ENCODE measurements at regions of chr4 and their contacts with region 1.

Region 1: DNA sequence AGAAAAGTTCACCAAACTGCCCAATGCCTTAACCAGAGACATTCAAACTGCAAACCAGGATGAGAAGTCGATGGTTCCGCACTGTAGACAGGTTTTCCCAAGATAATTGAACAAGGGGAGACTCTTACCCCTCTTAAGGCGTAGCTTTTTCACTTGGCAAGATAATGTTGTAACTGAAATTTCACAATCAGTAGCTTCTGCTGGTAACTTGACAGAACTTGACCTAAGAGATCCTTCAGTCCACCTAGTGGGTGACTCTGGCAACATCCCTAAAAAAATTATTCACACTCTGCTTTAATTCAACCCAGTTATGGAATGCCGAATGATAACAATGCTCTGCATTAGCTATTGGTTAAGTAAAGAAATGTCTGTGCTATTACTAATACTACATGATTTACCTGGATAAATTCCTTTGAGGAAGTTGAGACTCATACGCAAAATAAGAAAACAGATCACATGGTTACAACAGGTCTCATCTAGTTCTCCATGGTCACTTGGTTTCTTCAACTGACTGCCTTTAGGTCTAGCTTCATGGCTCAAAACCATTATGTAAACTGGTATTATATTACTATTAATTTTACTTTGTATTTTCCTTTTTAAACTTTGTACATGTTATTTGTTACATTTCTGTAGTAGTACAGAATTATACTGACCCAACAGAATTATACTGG is 9.1 kb downstream of the ELF2 start:
- DNase-seq: peak; percentile 65
- ATAC-seq: peak; percentile 59
- H3K4me3 ChIP-seq: no peak overlapping the region
- H3K27ac ChIP-seq: no peak overlapping the region
- H3K4me1 ChIP-seq: peaks cover 8% of the 10 kb centered on the region
- H3K27me3 ChIP-seq: no peaks in the 10 kb centered on the region
- CTCF ChIP-seq: peak; percentile 60

Region 2: DNA sequence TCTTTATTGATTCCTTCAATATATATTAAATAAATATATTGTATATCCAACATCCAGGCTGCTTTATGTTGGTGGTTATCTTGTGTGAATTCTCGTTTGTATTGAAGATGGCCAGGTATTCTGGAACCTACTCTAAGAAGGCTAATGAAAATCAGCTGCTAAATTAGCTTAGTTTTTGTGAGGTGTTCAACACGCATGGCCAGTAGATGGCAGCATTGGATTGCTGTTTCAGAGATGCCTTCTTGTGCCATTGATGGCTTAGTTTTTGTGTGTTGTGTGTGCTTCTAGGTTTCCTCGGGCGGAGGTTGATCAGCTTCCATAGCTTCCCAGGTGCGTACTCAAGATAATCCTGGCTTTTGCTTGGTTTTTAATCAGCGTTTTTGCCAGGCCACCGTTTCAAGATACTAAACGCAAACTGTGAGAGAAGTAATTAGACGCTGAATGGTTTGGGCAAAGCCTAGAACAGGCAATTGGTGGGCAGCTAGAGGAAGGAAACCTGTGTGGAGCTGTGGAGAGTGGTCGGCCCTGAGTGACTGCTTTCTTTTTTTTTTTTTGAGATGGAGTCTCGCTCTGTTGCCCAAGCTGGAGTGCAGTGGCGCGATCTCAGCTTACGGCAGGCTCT is 137.2 kb before region 1 on chr4:
- CTCF ChIA-PET with region 1: interaction called, 4 read pairs
- POLR2A ChIA-PET with region 1: no interaction called
- intact Hi-C with region 1: loop called (anchors 5 kb)
- DNase-seq: peak; percentile 72
- ATAC-seq: peak; percentile 68
- H3K4me3 ChIP-seq: no peak overlapping the region
- H3K27ac ChIP-seq: no peak overlapping the region
- H3K4me1 ChIP-seq: no peaks in the 10 kb centered on the region
- H3K27me3 ChIP-seq: no peaks in the 10 kb centered on the region
- CTCF ChIP-seq: peak; percentile 74

Region 3: DNA sequence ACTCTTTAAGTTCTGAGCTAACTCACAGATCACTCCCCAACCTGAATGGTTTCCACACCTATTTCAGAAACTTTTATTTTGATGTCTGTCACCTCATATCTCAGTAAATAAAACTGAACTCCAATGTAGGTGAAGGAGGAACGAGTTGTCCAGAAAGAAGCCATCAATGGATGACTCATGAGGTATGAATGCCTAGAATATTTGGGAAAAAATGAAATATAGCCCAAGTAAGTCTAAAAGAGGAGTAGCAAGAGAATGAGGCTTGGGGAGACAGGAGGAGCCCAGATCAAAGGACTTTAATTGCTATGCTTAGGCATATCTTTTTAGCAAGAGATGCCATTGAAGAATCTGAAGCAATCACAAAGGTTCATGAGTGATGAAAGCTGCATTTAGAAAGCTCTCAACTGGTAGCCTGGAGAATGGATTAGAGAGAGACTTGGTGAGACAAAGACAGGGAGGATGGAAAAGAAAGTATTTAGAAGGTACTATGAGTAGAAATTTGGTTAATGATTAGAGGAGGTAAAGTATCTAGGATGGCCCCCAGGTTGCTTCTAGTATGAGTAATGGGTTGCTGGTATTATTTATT is 113.0 kb before region 1 on chr4:
- CTCF ChIA-PET with region 1: no interaction called
- POLR2A ChIA-PET with region 1: no interaction called
- intact Hi-C with region 1: no loop called
- DNase-seq: peak; percentile 59
- ATAC-seq: peak; percentile 73
- H3K4me3 ChIP-seq: no peak overlapping the region
- H3K27ac ChIP-seq: no peak overlapping the region
- H3K4me1 ChIP-seq: peaks cover 17% of the 10 kb centered on the region
- H3K27me3 ChIP-seq: no peaks in the 10 kb centered on the region
- CTCF ChIP-seq: no peak

Region 4: GRCh38 chr4:139099366-139099982 is 68.4 kb before region 1 on chr4:
- CTCF ChIA-PET with region 1: no interaction called
- POLR2A ChIA-PET with region 1: no interaction called
- intact Hi-C with region 1: loop called (anchors 1 kb)
- DNase-seq: peak; percentile 81
- ATAC-seq: peak; percentile 57
- H3K4me3 ChIP-seq: no peak overlapping the region
- H3K27ac ChIP-seq: no peak overlapping the region
- H3K4me1 ChIP-seq: no peaks in the 10 kb centered on the region
- H3K27me3 ChIP-seq: no peaks in the 10 kb centered on the region
- CTCF ChIP-seq: peak; percentile 81

Measured in PC-3 (cell line).